Dendritic cell treated with granulocyte-macrophage colony-stimulating factor and Interleukin-4, amounts not matched to agents 40 ng/mL and 50 ng/mL, for 4 days (primary cell): ENCODE measurements at regions of chr15 and their contacts with region 1.

Region 1: DNA sequence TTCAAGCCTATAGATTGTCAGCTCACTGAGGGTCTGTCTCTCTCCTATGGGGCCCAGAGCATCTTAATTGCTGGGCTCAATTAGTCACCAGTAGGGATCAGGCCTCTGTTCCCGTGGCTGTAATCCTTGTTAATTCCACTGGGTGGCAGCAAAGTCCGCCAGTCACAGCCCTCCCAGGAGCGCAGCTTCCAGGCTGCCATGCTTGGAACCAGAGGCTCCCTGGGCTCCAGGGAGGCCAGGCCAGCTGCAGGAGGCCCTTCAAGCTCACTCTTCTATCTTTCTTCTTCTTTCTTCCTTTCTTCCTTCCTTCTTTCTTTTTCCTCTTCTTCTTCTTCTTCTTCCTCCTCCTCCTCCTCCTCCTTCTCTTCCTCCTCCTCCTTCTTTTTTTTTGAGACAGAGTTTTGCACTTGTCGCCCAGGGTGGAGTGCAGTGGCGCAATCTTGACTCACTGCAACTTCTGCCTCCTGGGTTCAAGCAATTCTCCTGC is 14.4 kb downstream of the RNU5B-1 start:
- H3K4me3 Mint-ChIP-seq: no peak overlapping the region
- H3K27ac Mint-ChIP-seq: no peak overlapping the region
- H3K4me1 Mint-ChIP-seq: peaks cover 12% of the 10 kb centered on the region
- H3K27me3 Mint-ChIP-seq: peaks cover 30% of the 10 kb centered on the region

Region 2: GRCh38 chr15:65258375-65259262 is 60.3 kb before region 1 on chr15:
- intact Hi-C with region 1: no loop called
- H3K4me3 Mint-ChIP-seq: no peak overlapping the region
- H3K27ac Mint-ChIP-seq: no peak overlapping the region
- H3K4me1 Mint-ChIP-seq: no peaks in the 10 kb centered on the region
- H3K27me3 Mint-ChIP-seq: no peaks in the 10 kb centered on the region

Region 3: GRCh38 chr15:65384895-65385858 is 66.3 kb after region 1 on chr15:
- intact Hi-C with region 1: loop called (anchors 1 kb)
- H3K4me3 Mint-ChIP-seq: peak overlapping the region; percentile 87
- H3K27ac Mint-ChIP-seq: peak overlapping the region; percentile 53
- H3K4me1 Mint-ChIP-seq: peaks cover 14% of the 10 kb centered on the region
- H3K27me3 Mint-ChIP-seq: peaks cover 54% of the 10 kb centered on the region

Region 4: GRCh38 chr15:65400760-65401610 is 82.1 kb after region 1 on chr15:
- intact Hi-C with region 1: loop called (anchors 5 kb)
- H3K4me3 Mint-ChIP-seq: no peak overlapping the region
- H3K27ac Mint-ChIP-seq: no peak overlapping the region
- H3K4me1 Mint-ChIP-seq: peaks cover 10% of the 10 kb centered on the region
- H3K27me3 Mint-ChIP-seq: peaks cover 53% of the 10 kb centered on the region